Activated B cell treated with CpG ODN at 0.5 μM for 24 hours (primary cell): ENCODE measurements at regions of chr17 and their contacts with region 1.

Region 1: GRCh38 chr17:2837147-2837561 is 40.9 kb downstream of the RAP1GAP2 start:
- DNase-seq: peak; percentile 63
- ATAC-seq: peak; percentile 100
- H3K4me3 Mint-ChIP-seq: no peak overlapping the region
- H3K27ac Mint-ChIP-seq: no peak overlapping the region
- H3K4me1 Mint-ChIP-seq: peaks cover 9% of the 10 kb centered on the region
- H3K27me3 Mint-ChIP-seq: peaks cover 11% of the 10 kb centered on the region
- CTCF ChIP-seq: no peak

Region 2: GRCh38 chr17:2814481-2815341 is 22.4 kb before region 1 on chr17:
- CTCF ChIA-PET with region 1: interaction called, 10 read pairs
- POLR2A ChIA-PET with region 1: interaction called, 38 read pairs
- intact Hi-C with region 1: loop called (anchors 1 kb)
- DNase-seq: peak; percentile 67
- ATAC-seq: peak; percentile 84
- H3K4me3 Mint-ChIP-seq: peak overlapping the region; percentile 64
- H3K27ac Mint-ChIP-seq: peak overlapping the region; percentile 73
- H3K4me1 Mint-ChIP-seq: peaks cover 46% of the 10 kb centered on the region
- H3K27me3 Mint-ChIP-seq: no peaks in the 10 kb centered on the region
- CTCF ChIP-seq: no peak

Region 3: DNA sequence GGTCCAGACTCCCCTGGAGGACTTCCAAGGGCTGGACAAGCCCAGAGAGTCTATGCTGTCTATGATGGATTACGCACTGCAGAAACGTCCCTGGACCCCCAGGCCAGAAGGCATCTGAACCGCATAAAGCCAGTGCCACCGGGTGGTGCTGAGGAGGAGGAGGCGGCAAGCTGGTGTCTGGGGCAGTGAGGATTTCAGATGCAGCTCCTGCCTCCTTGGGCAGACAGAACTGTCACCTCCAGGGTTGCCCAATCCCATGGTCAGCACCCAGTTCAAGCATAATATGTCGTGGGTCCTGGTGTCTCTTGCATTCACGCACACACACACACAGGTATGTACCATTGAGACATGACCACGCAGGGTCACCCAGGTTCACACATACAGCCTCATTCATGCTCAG is 15.3 kb before region 1 on chr17:
- CTCF ChIA-PET with region 1: interaction called, 17 read pairs
- POLR2A ChIA-PET with region 1: interaction called, 8 read pairs
- intact Hi-C with region 1: loop called (anchors 2 kb)
- DNase-seq: no peak
- ATAC-seq: no peak
- H3K4me3 Mint-ChIP-seq: no peak overlapping the region
- H3K27ac Mint-ChIP-seq: no peak overlapping the region
- H3K4me1 Mint-ChIP-seq: peaks cover 54% of the 10 kb centered on the region
- H3K27me3 Mint-ChIP-seq: no peaks in the 10 kb centered on the region
- CTCF ChIP-seq: no peak

Region 4: DNA sequence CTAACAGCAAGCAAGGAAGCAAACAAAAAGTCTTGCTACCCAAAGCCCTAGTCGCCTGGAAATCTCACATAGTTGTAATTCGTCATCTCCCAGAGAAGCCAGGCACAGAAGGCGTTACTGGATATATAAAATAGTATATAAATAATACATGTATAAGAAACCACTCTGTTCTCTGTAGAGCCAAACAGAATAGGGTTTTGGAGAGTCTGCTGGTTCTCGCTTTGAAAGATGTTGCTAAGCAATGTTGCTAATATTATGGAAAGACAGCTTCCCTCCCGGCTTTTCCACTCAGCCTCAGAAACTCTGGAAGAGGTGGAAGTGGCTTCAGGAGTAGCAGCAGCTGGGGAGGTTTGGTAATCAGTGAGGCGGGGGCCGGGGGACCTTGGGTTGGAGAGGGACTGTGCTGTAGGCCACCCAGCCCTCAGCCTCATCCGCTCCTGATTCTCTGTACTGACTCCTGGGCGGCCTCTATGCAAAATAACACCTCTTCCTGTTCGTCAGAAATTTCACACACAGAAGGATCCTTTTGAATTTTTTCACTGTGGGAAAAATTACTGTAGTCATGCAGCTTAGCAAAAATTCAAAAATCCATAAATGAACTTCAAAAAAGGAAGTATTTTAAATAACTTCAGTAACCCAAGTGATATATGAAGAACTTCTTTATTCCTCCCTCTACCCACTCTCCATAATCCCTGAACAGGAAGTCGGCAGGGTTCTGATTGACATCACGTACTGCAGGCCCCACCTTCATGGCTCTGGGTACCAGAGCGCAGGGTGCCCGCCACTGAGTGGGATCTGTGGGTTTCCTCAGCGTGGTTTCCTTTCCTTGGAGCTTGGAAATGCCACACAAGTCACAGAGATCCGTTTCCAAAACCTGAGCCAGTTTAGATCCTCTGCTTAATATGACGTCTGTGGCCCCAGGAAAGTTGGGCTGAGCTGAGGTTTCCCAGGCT is 10.5 kb after region 1 on chr17:
- CTCF ChIA-PET with region 1: interaction called, 13 read pairs
- POLR2A ChIA-PET with region 1: no interaction called
- intact Hi-C with region 1: loop called (anchors 2 kb)
- DNase-seq: no peak
- ATAC-seq: no peak
- H3K4me3 Mint-ChIP-seq: no peak overlapping the region
- H3K27ac Mint-ChIP-seq: no peak overlapping the region
- H3K4me1 Mint-ChIP-seq: peaks cover 15% of the 10 kb centered on the region
- H3K27me3 Mint-ChIP-seq: peaks cover 31% of the 10 kb centered on the region
- CTCF ChIP-seq: no peak

Region 5: GRCh38 chr17:2853111-2853721 is 16.1 kb after region 1 on chr17:
- CTCF ChIA-PET with region 1: interaction called, 13 read pairs
- POLR2A ChIA-PET with region 1: interaction called, 4 read pairs
- intact Hi-C with region 1: loop called (anchors 2 kb)
- DNase-seq: peak; percentile 37
- ATAC-seq: peak; percentile 11
- H3K4me3 Mint-ChIP-seq: peak overlapping the region; percentile 52
- H3K27ac Mint-ChIP-seq: no peak overlapping the region
- H3K4me1 Mint-ChIP-seq: peaks cover 21% of the 10 kb centered on the region
- H3K27me3 Mint-ChIP-seq: peaks cover 42% of the 10 kb centered on the region
- CTCF ChIP-seq: no peak